Ovary (tissue), 10 donors: ENCODE measurements at regions of chr3 and their contacts with region 1.

Region 1: GRCh38 chr3:60351481-60351880 is 899.8 kb downstream of the FHIT start:
- DNase-seq: no peak
- H3K4me3 ChIP-seq: no peak overlapping the region
- H3K27ac ChIP-seq: no peak overlapping the region
- H3K4me1 ChIP-seq: no peaks in the 10 kb centered on the region
- H3K27me3 ChIP-seq: no peaks in the 10 kb centered on the region
- CTCF ChIP-seq: no peak
- EP300 ChIP-seq: no peak
- POLR2A ChIP-seq: no peak

Region 2: DNA sequence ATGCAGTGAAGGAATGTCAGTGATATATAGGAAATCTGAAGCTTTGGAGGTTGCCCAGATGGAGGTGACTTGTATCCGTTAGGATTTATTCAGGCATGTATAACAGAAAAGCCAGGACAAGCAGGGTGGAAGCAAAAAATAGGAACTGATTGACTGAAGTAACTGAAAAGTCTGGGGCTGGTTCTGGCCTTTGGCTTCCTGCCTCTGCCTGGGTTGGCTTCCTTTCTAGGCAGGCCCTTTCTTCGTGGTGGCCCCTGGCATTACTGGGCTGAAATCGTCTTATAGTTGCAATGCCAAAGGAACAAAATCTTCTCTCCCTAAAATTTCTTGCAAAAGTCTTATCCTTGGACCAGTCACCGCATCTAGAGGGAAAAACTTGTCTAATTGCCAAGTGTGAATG is 1596.0 kb after region 1 on chr3:
- intact Hi-C with region 1: loop called in 1 of 4 experiments (anchors 5 kb)
- DNase-seq: no peak
- H3K4me3 ChIP-seq: no peak overlapping the region
- H3K27ac ChIP-seq: no peak overlapping the region
- H3K4me1 ChIP-seq: no peaks in the 10 kb centered on the region
- H3K27me3 ChIP-seq: no peaks in the 10 kb centered on the region
- CTCF ChIP-seq: no peak
- EP300 ChIP-seq: no peak
- POLR2A ChIP-seq: no peak